Motor neuron (in vitro differentiated cells): ENCODE measurements at regions of chr5 and their contacts with region 1.

Region 1: GRCh38 chr5:147949711-147950573 is 43.6 kb upstream of the C5orf46 start:
- ATAC-seq: peak in 4 of 8 experiments; percentile 66 to 74 (median 70)
- H3K4me3 ChIP-seq: no peak overlapping the region
- H3K27ac ChIP-seq: no peak overlapping the region
- H3K4me1 ChIP-seq: no peaks in the 10 kb centered on the region

Region 2: DNA sequence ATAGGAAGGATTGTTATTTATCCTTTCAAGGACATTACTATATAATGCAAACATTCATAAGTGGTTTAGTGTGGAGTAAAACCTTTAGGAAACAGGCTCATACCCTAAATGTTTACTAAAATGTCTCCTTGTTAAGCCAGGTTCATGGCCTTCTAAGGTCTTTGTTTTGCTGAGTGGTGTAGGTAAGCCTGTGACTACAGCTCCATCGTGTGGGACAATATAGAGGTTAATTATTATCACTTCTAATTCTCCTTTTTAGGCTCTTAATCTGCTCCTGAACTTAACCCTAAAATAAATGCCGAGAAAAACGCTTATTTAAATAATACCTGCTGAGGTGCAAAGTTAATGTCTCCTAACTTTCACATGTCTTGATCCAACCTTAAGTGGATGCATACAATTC is 157.7 kb after region 1 on chr5:
- in situ Hi-C with region 1: loop called in 2 of 9 experiments (anchors 10 to 25 kb)
- ATAC-seq: peak in 1 of 8 experiments; percentile 27
- H3K4me3 ChIP-seq: no peak overlapping the region
- H3K27ac ChIP-seq: no peak overlapping the region
- H3K4me1 ChIP-seq: no peaks in the 10 kb centered on the region

Region 3: GRCh38 chr5:148113243-148113642 is 163.3 kb after region 1 on chr5:
- in situ Hi-C with region 1: loop called in 2 of 9 experiments (anchors 10 to 25 kb)
- ATAC-seq: no peak
- H3K4me3 ChIP-seq: no peak overlapping the region
- H3K27ac ChIP-seq: no peak overlapping the region
- H3K4me1 ChIP-seq: no peaks in the 10 kb centered on the region

Region 4: DNA sequence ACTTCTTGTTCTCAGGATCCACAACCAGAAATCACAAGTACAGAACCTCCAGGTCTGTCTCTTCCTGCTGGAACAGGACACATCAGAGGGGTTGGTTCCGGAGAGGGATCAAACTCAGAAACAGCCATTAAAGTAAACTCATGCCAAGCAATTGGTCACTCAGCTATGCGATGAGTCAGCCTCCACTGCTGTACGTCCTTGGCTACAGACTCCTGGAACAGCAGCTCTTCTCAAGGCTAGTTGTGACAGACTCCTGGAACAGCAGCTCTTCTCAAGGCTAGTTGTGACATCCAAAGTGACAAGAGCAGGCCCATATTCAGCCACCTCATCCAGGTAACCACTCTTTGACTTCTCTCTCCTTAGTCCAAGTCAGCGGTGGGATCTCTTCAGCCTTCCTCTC is 318.6 kb after region 1 on chr5 and contains the start of gene SPINK13:
- in situ Hi-C with region 1: no loop called
- ATAC-seq: peak in 4 of 8 experiments; percentile 21 to 100 (median 73)
- H3K4me3 ChIP-seq: no peak within 1 kb of the TSS
- H3K27ac ChIP-seq: no peak within 1 kb of the TSS
- H3K4me1 ChIP-seq: no peaks in the 10 kb centered on the region
- total RNA-seq, gene SPINK13: 0.29 to 0.51 (median 0.32) TPM in 3 of 8 experiments, not detected in the others